ENCODE measurements at regions of chr10 and their contacts with region 1.

Region 1: GRCh38 chr10:30534465-30535144 is 94.9 kb downstream of the LYZL2 start:
- DNase-seq: peak; percentile 52 to 89 (median 66)
- ATAC-seq: peak; percentile 39
- H3K4me3 ChIP-seq: no peak overlapping the region
- H3K4me3 Mint-ChIP-seq: no peak overlapping the region
- H3K27ac ChIP-seq: no peak overlapping the region
- H3K27ac Mint-ChIP-seq: no peak overlapping the region
- H3K4me1 ChIP-seq: peaks cover 19% of the 10 kb centered on the region
- H3K4me1 Mint-ChIP-seq: peaks cover 20% of the 10 kb centered on the region
- H3K27me3 ChIP-seq: no peaks in the 10 kb centered on the region
- H3K27me3 Mint-ChIP-seq: no peaks in the 10 kb centered on the region
- CTCF ChIP-seq: peak; percentile 87

Region 2: GRCh38 chr10:30368065-30368718 is 166.4 kb before region 1 on chr10:
- CTCF ChIA-PET with region 1: no interaction called
- POLR2A ChIA-PET with region 1: no interaction called
- intact Hi-C with region 1: no loop called
- DNase-seq: no peak
- ATAC-seq: no peak
- H3K4me3 ChIP-seq: no peak overlapping the region
- H3K4me3 Mint-ChIP-seq: no peak overlapping the region
- H3K27ac ChIP-seq: no peak overlapping the region
- H3K27ac Mint-ChIP-seq: no peak overlapping the region
- H3K4me1 ChIP-seq: peaks cover 9% of the 10 kb centered on the region
- H3K4me1 Mint-ChIP-seq: peaks cover 4% of the 10 kb centered on the region
- H3K27me3 ChIP-seq: no peaks in the 10 kb centered on the region
- H3K27me3 Mint-ChIP-seq: peaks cover 4% of the 10 kb centered on the region
- CTCF ChIP-seq: no peak

Region 3: GRCh38 chr10:30392564-30392990 is 142.0 kb before region 1 on chr10:
- CTCF ChIA-PET with region 1: interaction called, 12 read pairs
- POLR2A ChIA-PET with region 1: interaction called, 11 read pairs
- intact Hi-C with region 1: loop called (anchors 1 kb)
- DNase-seq: peak; percentile 59 to 86 (median 69)
- ATAC-seq: peak; percentile 100
- H3K4me3 ChIP-seq: no peak overlapping the region
- H3K4me3 Mint-ChIP-seq: no peak overlapping the region
- H3K27ac ChIP-seq: no peak overlapping the region
- H3K27ac Mint-ChIP-seq: no peak overlapping the region
- H3K4me1 ChIP-seq: peaks cover 7% of the 10 kb centered on the region
- H3K4me1 Mint-ChIP-seq: peaks cover 3% of the 10 kb centered on the region
- H3K27me3 ChIP-seq: peaks cover 0 to 2% of the 10 kb centered on the region in 2 experiments
- H3K27me3 Mint-ChIP-seq: peaks cover 12% of the 10 kb centered on the region
- CTCF ChIP-seq: peak; percentile 88

Region 4: GRCh38 chr10:30433730-30434272 is 100.8 kb before region 1 on chr10 and contains the start of gene MAP3K8:
- CTCF ChIA-PET with region 1: interaction called, 3 read pairs
- POLR2A ChIA-PET with region 1: interaction called, 32 read pairs
- intact Hi-C with region 1: loop called (anchors 5 kb)
- DNase-seq: peak; percentile 43 to 95 (median 69)
- ATAC-seq: peak; percentile 71
- H3K4me3 ChIP-seq: peak within 1 kb of the TSS; percentile 93
- H3K4me3 Mint-ChIP-seq: peak within 1 kb of the TSS; percentile 94
- H3K27ac ChIP-seq: peak within 1 kb of the TSS; percentile 74
- H3K27ac Mint-ChIP-seq: peak within 1 kb of the TSS; percentile 69
- H3K4me1 ChIP-seq: peaks cover 45% of the 10 kb centered on the region
- H3K4me1 Mint-ChIP-seq: peaks cover 44% of the 10 kb centered on the region
- H3K27me3 ChIP-seq: no peaks in the 10 kb centered on the region
- H3K27me3 Mint-ChIP-seq: peaks cover 4% of the 10 kb centered on the region
- CTCF ChIP-seq: no peak
- total RNA-seq, gene MAP3K8: 27.3 to 28.9 TPM

Region 5: DNA sequence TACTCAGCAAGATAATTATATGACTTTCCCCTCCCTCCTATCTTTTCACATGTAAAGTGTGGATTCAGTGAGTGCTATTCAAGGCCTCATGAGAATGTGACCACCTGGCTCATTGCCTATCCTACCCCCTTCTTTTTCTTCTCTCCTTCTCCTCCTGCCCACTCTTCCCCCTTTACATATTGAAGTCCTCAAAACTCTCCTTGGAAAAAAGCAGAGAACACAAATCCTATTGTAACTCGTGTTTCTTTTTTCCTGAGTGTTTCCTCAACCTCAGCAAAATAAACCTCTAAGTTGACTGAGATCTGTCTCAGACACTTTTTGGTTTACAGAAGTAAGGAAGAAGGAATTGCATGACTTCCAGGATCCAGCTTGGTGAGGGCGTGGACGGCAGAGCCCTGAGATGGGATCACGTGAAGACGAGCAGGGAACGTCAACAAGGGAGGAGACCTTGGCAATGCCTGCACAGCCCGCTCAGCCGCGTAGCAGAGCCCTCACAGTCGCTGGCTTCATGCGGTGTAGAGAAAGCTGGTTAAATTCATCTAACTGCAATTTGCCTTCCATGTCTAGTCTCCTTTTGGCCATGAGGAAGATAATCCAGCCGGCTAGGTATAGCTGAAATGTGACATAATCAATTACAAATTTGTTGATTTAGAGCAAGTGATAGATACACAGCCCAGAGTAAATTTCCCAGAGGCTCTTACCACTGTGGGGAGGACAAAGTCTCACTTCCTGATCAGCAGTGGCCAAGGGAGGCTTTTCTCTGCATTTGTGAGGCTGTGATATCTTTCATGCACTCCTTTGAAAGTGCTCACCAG is 19.2 kb after region 1 on chr10:
- CTCF ChIA-PET with region 1: no interaction called
- POLR2A ChIA-PET with region 1: no interaction called
- intact Hi-C with region 1: no loop called
- DNase-seq: no peak
- ATAC-seq: no peak
- H3K4me3 ChIP-seq: no peak overlapping the region
- H3K4me3 Mint-ChIP-seq: no peak overlapping the region
- H3K27ac ChIP-seq: no peak overlapping the region
- H3K27ac Mint-ChIP-seq: no peak overlapping the region
- H3K4me1 ChIP-seq: no peaks in the 10 kb centered on the region
- H3K4me1 Mint-ChIP-seq: peaks cover 4% of the 10 kb centered on the region
- H3K27me3 ChIP-seq: no peaks in the 10 kb centered on the region
- H3K27me3 Mint-ChIP-seq: no peaks in the 10 kb centered on the region
- CTCF ChIP-seq: no peak

Region 6: DNA sequence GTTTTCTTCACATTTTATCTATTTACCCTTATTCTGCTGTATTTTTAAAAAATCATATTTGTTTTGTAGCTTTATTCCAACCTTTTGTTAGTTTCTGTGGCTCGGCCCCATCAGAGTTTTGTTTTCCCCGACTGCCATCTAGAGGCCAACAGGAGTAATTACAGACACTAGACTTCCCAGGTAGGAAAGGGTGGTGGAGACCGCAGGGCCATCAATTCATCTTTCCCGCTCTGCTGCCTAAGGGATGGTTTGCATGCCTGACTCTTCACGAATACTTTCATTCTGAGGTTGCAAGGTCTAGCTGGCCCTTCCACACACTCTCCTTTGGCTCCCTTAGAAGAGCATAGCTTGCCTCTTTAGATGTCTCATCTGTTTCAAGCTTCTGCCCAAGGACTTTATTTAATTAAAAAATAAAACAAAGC is 56.7 kb after region 1 on chr10:
- CTCF ChIA-PET with region 1: interaction called, 5 read pairs
- POLR2A ChIA-PET with region 1: interaction called, 5 read pairs
- intact Hi-C with region 1: loop called (anchors 2 kb)
- DNase-seq: peak in 13 of 14 experiments; percentile 8 to 82 (median 20)
- ATAC-seq: peak; percentile 74
- H3K4me3 ChIP-seq: no peak overlapping the region
- H3K4me3 Mint-ChIP-seq: no peak overlapping the region
- H3K27ac ChIP-seq: no peak overlapping the region
- H3K27ac Mint-ChIP-seq: no peak overlapping the region
- H3K4me1 ChIP-seq: peaks cover 3% of the 10 kb centered on the region
- H3K4me1 Mint-ChIP-seq: no peaks in the 10 kb centered on the region
- H3K27me3 ChIP-seq: no peaks in the 10 kb centered on the region
- H3K27me3 Mint-ChIP-seq: no peaks in the 10 kb centered on the region
- CTCF ChIP-seq: peak; percentile 90

Measured in CD4-positive, alpha-beta T cell (primary cell).